PC-3 (cell line): ENCODE measurements at regions of chr12 and their contacts with region 1.

Region 1: DNA sequence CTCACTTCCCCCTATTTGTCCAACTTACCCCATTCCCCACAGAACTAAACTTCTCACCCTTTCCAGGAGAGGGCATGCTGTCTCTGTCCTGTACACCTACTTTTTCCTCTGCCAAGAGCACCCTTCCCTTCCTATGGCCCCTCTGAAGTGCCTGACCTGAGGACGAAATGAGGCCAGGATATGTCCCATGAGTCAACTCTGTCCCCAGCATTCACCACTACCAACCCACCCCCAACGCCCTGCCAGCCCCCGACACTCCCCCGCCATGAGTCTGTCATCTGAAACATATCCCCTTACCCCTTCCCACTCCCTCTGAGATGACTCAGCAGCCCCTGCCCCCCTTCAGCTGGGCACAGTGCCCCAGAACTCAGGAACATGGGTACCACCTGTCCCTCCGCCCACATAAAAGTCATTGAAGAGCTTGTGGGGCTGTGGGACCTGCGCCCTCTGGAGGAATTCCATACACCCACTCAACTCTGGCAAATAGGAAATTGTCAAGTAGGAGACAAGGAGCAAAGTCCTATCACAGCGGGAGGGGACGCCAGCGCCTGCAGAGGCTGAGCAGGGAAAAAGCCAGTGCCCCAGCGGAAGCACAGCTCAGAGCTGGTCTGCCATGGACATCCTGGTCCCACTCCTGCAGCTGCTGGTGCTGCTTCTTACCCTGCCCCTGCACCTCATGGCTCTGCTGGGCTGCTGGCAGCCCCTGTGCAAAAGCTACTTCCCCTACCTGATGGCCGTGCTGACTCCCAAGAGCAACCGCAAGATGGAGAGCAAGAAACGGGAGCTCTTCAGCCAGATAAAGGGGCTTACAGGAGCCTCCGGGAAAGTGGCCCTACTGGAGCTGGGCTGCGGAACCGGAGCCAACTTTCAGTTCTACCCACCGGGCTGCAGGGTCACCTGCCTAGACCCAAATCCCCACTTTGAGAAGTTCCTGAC is 26.3 kb downstream of the ITGA7 start:
- DNase-seq: peak; percentile 92
- ATAC-seq: peak; percentile 91
- H3K4me3 ChIP-seq: peak overlapping the region; percentile 74
- H3K27ac ChIP-seq: peak overlapping the region; percentile 12
- H3K4me1 ChIP-seq: 0 out of 2 replicates have a peak, but pooled peaks cover 12% of the 10 kb centered on the region
- H3K27me3 ChIP-seq: no peaks in the 10 kb centered on the region
- CTCF ChIP-seq: peak; percentile 80

Region 2: GRCh38 chr12:55642669-55643068 is 38.7 kb before region 1 on chr12:
- CTCF ChIA-PET with region 1: no interaction called
- POLR2A ChIA-PET with region 1: no interaction called
- intact Hi-C with region 1: loop called (anchors 1 kb)
- DNase-seq: no peak
- ATAC-seq: no peak
- H3K4me3 ChIP-seq: no peak overlapping the region
- H3K27ac ChIP-seq: no peak overlapping the region
- H3K4me1 ChIP-seq: peaks cover 4% of the 10 kb centered on the region; the same call in 1 of the 2 replicates
- H3K27me3 ChIP-seq: peaks cover 39% of the 10 kb centered on the region
- CTCF ChIP-seq: no peak

Region 3: DNA sequence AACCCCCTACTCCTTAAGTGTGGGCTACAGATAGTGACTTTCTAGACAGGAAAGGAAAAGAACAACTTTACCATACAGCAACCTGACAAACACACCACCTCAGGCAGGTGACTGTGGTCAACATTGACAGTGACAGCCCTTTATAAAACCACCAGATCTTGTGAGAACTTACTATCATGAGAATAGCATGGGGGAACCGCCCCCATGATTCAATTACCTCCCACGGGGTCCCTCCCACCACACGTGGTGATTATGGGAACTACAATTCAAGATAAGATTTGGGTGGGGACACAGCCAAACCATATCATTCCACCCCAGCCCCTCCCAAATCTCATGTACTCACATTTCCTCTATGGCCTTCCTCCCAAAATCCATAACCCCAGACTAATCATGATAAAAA is 28.4 kb before region 1 on chr12:
- CTCF ChIA-PET with region 1: no interaction called
- POLR2A ChIA-PET with region 1: no interaction called
- intact Hi-C with region 1: no loop called
- DNase-seq: no peak
- ATAC-seq: no peak
- H3K4me3 ChIP-seq: no peak overlapping the region
- H3K27ac ChIP-seq: no peak overlapping the region
- H3K4me1 ChIP-seq: no peaks in the 10 kb centered on the region
- H3K27me3 ChIP-seq: no peaks in the 10 kb centered on the region
- CTCF ChIP-seq: no peak

Region 4: GRCh38 chr12:55707841-55708694 is 26.7 kb after region 1 on chr12 and contains the start of gene ITGA7:
- CTCF ChIA-PET with region 1: interaction called, 6 read pairs
- POLR2A ChIA-PET with region 1: interaction called, 8 read pairs
- intact Hi-C with region 1: loop called (anchors 1 kb)
- DNase-seq: peak; percentile 42
- ATAC-seq: peak; percentile 88
- H3K4me3 ChIP-seq: peak within 1 kb of the TSS; percentile 68
- H3K27ac ChIP-seq: no peak within 1 kb of the TSS
- H3K4me1 ChIP-seq: peaks cover 16% of the 10 kb centered on the region
- H3K27me3 ChIP-seq: no peaks in the 10 kb centered on the region
- CTCF ChIP-seq: no peak
- total RNA-seq, gene ITGA7: 4.4 and 9.7 TPM in 2 replicates

Region 5: DNA sequence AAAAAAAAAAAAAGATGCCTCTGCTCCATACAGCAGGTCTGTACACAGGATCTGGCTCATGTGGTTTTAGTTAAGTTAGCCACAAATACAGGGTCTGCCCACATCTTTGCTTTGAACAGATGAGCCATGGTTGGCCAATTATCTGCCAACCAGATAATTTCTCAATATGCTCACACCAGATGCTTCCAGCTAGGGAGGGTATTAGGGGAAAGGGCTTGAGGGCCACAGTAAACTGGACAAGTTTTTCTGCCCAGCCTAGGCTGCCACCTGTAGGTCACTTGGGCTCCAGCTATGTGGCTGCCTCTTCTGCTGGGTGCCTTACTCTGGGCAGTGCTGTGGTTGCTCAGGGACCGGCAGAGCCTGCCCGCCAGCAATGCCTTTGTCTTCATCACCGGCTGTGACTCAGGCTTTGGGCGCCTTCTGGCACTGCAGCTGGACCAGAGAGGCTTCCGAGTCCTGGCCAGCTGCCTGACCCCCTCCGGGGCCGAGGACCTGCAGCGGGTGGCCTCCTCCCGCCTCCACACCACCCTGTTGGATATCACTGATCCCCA is 39.6 kb after region 1 on chr12:
- CTCF ChIA-PET with region 1: interaction called, 50 read pairs
- POLR2A ChIA-PET with region 1: interaction called, 4 read pairs
- intact Hi-C with region 1: loop called (anchors 1 kb)
- DNase-seq: peak; percentile 98
- ATAC-seq: peak; percentile 81
- H3K4me3 ChIP-seq: peak overlapping the region; percentile 31; the same call in 1 of the 2 replicates
- H3K27ac ChIP-seq: peak overlapping the region; percentile 52
- H3K4me1 ChIP-seq: peaks cover 64% of the 10 kb centered on the region
- H3K27me3 ChIP-seq: no peaks in the 10 kb centered on the region
- CTCF ChIP-seq: peak; percentile 83

Region 6: GRCh38 chr12:56243731-56244181 is 562.3 kb after region 1 on chr12:
- CTCF ChIA-PET with region 1: no interaction called
- POLR2A ChIA-PET with region 1: no interaction called
- intact Hi-C with region 1: no loop called
- DNase-seq: no peak
- ATAC-seq: no peak
- H3K4me3 ChIP-seq: no peak overlapping the region
- H3K27ac ChIP-seq: no peak overlapping the region
- H3K4me1 ChIP-seq: no peaks in the 10 kb centered on the region
- H3K27me3 ChIP-seq: no peaks in the 10 kb centered on the region
- CTCF ChIP-seq: no peak

Region 7: GRCh38 chr12:57175428-57176138 is 1494.2 kb after region 1 on chr12:
- CTCF ChIA-PET with region 1: interaction called, 17 read pairs
- POLR2A ChIA-PET with region 1: no interaction called
- intact Hi-C with region 1: no loop called
- DNase-seq: peak; percentile 80
- ATAC-seq: peak; percentile 58
- H3K4me3 ChIP-seq: no peak overlapping the region
- H3K27ac ChIP-seq: no peak overlapping the region
- H3K4me1 ChIP-seq: peaks cover 18% of the 10 kb centered on the region
- H3K27me3 ChIP-seq: no peaks in the 10 kb centered on the region
- CTCF ChIP-seq: peak; percentile 91